AG04450 (cell line): ENCODE measurements at regions of chr12 and their contacts with region 1.

Region 1: DNA sequence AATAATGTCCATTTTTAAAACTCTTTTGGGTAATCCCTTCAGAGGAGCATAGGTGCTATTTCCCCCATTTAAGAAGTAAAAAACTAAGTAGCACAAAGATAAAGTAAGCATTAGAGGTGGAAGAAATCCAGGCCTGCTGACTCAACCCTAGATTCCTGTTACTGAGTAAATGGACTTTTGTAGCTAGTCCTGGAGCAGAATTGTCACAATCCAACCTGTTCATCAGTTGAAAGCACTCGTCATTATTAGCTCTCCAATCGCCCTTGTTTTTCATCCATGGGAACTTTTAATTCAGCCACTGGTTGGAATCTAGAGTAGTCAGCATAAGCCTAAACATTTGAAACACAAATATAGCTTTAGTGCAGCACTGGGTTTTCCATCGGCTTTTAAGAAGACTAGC is 139.5 kb upstream of the AMIGO2 start:
- DNase-seq: no peak
- H3K4me3 ChIP-seq: no peak overlapping the region
- H3K27ac ChIP-seq: no peak overlapping the region
- H3K27me3 ChIP-seq: no peaks in the 10 kb centered on the region
- CTCF ChIP-seq: no peak

Region 2: DNA sequence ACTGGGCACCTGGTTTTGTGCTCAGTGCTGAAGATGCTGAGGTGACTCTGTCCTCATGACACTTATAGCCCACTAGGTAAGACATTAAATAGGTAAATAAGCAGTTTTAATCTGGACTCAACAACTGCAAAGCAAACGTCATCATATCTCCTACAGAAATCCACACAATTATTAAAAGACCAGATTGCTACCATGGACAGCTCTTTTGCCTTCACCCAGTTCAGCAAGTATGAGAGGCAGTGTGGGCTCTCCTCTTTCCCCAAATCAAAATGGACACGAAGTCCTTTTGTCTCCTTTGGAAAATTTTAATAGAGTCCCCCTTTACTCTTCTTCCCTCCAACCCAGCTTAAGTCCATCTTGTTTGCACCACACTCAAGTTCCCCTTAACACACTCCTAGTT is 315.5 kb after region 1 on chr12:
- CTCF ChIA-PET with region 1: no interaction called
- POLR2A ChIA-PET with region 1: interaction called, 15 read pairs
- DNase-seq: no peak
- H3K4me3 ChIP-seq: no peak overlapping the region
- H3K27ac ChIP-seq: no peak overlapping the region
- H3K27me3 ChIP-seq: peaks cover 7% of the 10 kb centered on the region
- CTCF ChIP-seq: no peak